ENCODE measurements at regions of chr3 and their contacts with region 1.

Region 1: GRCh38 chr3:88101142-88101541 is 42.1 kb downstream of the ZNF654 start:
- DNase-seq: no peak
- ATAC-seq: no peak
- H3K4me3 ChIP-seq: no peak overlapping the region
- H3K4me3 Mint-ChIP-seq: no peak overlapping the region
- H3K27ac ChIP-seq: no peak overlapping the region
- H3K27ac Mint-ChIP-seq: no peak overlapping the region
- H3K4me1 ChIP-seq: no peaks in the 10 kb centered on the region
- H3K4me1 Mint-ChIP-seq: peaks cover 20% of the 10 kb centered on the region
- H3K27me3 ChIP-seq: no peaks in the 10 kb centered on the region
- H3K27me3 Mint-ChIP-seq: no peaks in the 10 kb centered on the region
- CTCF ChIP-seq: no peak

Region 2: GRCh38 chr3:87895983-87896382 is 205.2 kb before region 1 on chr3:
- CTCF ChIA-PET with region 1: no interaction called
- POLR2A ChIA-PET with region 1: no interaction called
- intact Hi-C with region 1: no loop called
- DNase-seq: no peak
- ATAC-seq: no peak
- H3K4me3 ChIP-seq: no peak overlapping the region
- H3K4me3 Mint-ChIP-seq: no peak overlapping the region
- H3K27ac ChIP-seq: no peak overlapping the region
- H3K27ac Mint-ChIP-seq: no peak overlapping the region
- H3K4me1 ChIP-seq: no peaks in the 10 kb centered on the region
- H3K4me1 Mint-ChIP-seq: no peaks in the 10 kb centered on the region
- H3K27me3 ChIP-seq: no peaks in the 10 kb centered on the region
- H3K27me3 Mint-ChIP-seq: peaks cover 4% of the 10 kb centered on the region
- CTCF ChIP-seq: no peak

Region 3: GRCh38 chr3:88131695-88132094 is 30.6 kb after region 1 on chr3:
- CTCF ChIA-PET with region 1: no interaction called
- POLR2A ChIA-PET with region 1: no interaction called
- intact Hi-C with region 1: loop called in 1 of 2 experiments (anchors 1 kb)
- DNase-seq: no peak
- ATAC-seq: no peak
- H3K4me3 ChIP-seq: no peak overlapping the region
- H3K4me3 Mint-ChIP-seq: no peak overlapping the region
- H3K27ac ChIP-seq: no peak overlapping the region
- H3K27ac Mint-ChIP-seq: no peak overlapping the region
- H3K4me1 ChIP-seq: no peaks in the 10 kb centered on the region
- H3K4me1 Mint-ChIP-seq: peaks cover 6% of the 10 kb centered on the region
- H3K27me3 ChIP-seq: no peaks in the 10 kb centered on the region
- H3K27me3 Mint-ChIP-seq: no peaks in the 10 kb centered on the region
- CTCF ChIP-seq: no peak

Region 4: GRCh38 chr3:88231207-88231606 is 130.1 kb after region 1 on chr3:
- CTCF ChIA-PET with region 1: no interaction called
- POLR2A ChIA-PET with region 1: no interaction called
- intact Hi-C with region 1: no loop called
- DNase-seq: no peak
- ATAC-seq: no peak
- H3K4me3 ChIP-seq: no peak overlapping the region
- H3K4me3 Mint-ChIP-seq: no peak overlapping the region
- H3K27ac ChIP-seq: no peak overlapping the region
- H3K27ac Mint-ChIP-seq: no peak overlapping the region
- H3K4me1 ChIP-seq: no peaks in the 10 kb centered on the region
- H3K4me1 Mint-ChIP-seq: no peaks in the 10 kb centered on the region
- H3K27me3 ChIP-seq: no peaks in the 10 kb centered on the region
- H3K27me3 Mint-ChIP-seq: peaks cover 5% of the 10 kb centered on the region
- CTCF ChIP-seq: no peak

Measured in CD8-positive, alpha-beta T cell (primary cell).